BJ (cell line): ENCODE measurements at regions of chr5 and their contacts with region 1.

Region 1: GRCh38 chr5:37722236-37723146 is 117.3 kb downstream of the GDNF start:
- DNase-seq: peak; percentile 81
- H3K4me3 ChIP-seq: no peak overlapping the region
- H3K27me3 ChIP-seq: no peaks in the 10 kb centered on the region
- CTCF ChIP-seq: no peak

Region 2: DNA sequence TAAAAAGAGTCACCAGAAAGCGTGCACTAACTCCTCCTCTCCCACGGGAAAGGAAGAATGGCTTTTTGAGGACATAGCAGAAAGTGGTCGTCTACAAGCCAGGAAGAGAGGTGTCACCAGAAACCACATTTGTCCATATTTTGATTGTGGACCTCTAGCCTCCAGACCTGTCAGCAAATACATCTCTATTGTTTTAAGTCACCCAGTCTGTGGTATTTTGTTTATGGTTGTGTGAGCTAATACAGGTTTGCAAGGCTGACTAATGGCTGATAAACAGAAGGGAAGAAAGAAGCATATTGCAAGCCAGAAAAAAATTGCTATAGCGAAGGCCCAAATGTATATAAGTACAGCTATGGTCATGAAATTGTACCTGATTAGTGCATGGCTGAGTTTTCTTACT is 322.0 kb before region 1 on chr5:
- CTCF ChIA-PET with region 1: interaction called, 3 read pairs
- POLR2A ChIA-PET with region 1: interaction called, 10 read pairs
- DNase-seq: no peak
- H3K4me3 ChIP-seq: no peak overlapping the region
- H3K27me3 ChIP-seq: no peaks in the 10 kb centered on the region
- CTCF ChIP-seq: no peak

Region 3: GRCh38 chr5:37412515-37413277 is 309.8 kb before region 1 on chr5:
- CTCF ChIA-PET with region 1: interaction called, 11 read pairs
- POLR2A ChIA-PET with region 1: no interaction called
- DNase-seq: peak; percentile 37
- H3K4me3 ChIP-seq: no peak overlapping the region
- H3K27me3 ChIP-seq: no peaks in the 10 kb centered on the region
- CTCF ChIP-seq: peak; percentile 92

Region 4: GRCh38 chr5:37735649-37736347 is 13.3 kb after region 1 on chr5:
- CTCF ChIA-PET with region 1: interaction called, 10 read pairs
- POLR2A ChIA-PET with region 1: no interaction called
- DNase-seq: no peak
- H3K4me3 ChIP-seq: no peak overlapping the region
- H3K27me3 ChIP-seq: no peaks in the 10 kb centered on the region
- CTCF ChIP-seq: no peak

Region 5: GRCh38 chr5:37774912-37775483 is 52.5 kb after region 1 on chr5:
- CTCF ChIA-PET with region 1: interaction called, 11 read pairs
- POLR2A ChIA-PET with region 1: no interaction called
- DNase-seq: no peak
- H3K4me3 ChIP-seq: no peak overlapping the region
- H3K27me3 ChIP-seq: no peaks in the 10 kb centered on the region
- CTCF ChIP-seq: peak; percentile 78